WTC11 (cell line): ENCODE measurements at regions of chr1 and their contacts with region 1.

Region 1: GRCh38 chr1:39098546-39099250 is 72.5 kb downstream of the NDUFS5 start:
- DNase-seq: peak; percentile 76
- ATAC-seq: peak; percentile 85
- H3K4me3 Mint-ChIP-seq: no peak overlapping the region
- H3K27ac Mint-ChIP-seq: peak overlapping the region; percentile 83; the same call in 1 of the 2 replicates
- H3K4me1 Mint-ChIP-seq: peaks cover 21% of the 10 kb centered on the region
- H3K27me3 Mint-ChIP-seq: no peaks in the 10 kb centered on the region
- CTCF ChIP-seq: peak; percentile 42; the same call in 1 of the 2 replicates

Region 2: DNA sequence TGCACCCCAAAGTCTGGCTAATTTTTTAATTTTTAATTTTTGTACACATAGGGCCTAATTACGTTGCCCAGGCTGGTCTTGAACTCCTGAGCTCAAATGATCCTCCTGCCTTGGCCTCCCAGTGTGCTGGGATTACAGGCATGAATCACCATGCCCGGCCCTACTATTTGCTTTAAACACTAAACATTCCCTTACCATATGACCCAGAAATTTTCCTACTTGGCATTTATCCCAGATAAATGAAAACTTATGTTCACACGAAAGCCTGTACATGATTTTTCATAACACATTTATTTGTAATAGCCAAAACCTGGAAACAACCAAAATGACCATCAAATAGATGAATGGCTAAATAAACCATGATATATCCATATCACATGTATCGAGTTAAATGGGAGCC is 36.7 kb before region 1 on chr1:
- CTCF ChIA-PET with region 1: no interaction called
- POLR2A ChIA-PET with region 1: no interaction called
- DNase-seq: no peak
- ATAC-seq: no peak
- H3K4me3 Mint-ChIP-seq: no peak overlapping the region
- H3K27ac Mint-ChIP-seq: no peak overlapping the region
- H3K4me1 Mint-ChIP-seq: peaks cover 3% of the 10 kb centered on the region; the same call in 1 of the 2 replicates
- H3K27me3 Mint-ChIP-seq: no peaks in the 10 kb centered on the region
- CTCF ChIP-seq: no peak

Region 3: DNA sequence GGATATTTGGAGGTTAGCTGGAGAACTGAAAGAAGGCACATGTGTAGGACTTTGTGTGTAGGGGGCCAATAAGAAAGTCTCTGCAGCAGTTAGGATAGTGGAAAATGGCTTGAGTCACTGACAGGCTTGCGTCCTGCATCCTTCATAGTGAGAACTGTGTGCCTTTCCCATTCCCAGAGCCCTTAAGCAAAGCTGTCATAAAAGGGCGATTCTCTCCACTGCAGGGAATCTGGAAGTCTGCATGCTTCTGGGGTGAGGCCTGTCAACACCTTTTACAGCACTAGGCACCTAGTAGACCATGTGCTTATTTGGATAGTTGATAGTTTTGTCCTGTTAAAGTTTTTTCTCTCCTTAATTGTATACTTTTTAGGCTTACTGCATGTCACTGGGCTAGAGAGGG is 66.4 kb after region 1 on chr1:
- CTCF ChIA-PET with region 1: interaction called, 11 read pairs
- POLR2A ChIA-PET with region 1: no interaction called
- DNase-seq: no peak
- ATAC-seq: peak; percentile 52
- H3K4me3 Mint-ChIP-seq: no peak overlapping the region
- H3K27ac Mint-ChIP-seq: peak overlapping the region; percentile 42
- H3K4me1 Mint-ChIP-seq: peaks cover 74% of the 10 kb centered on the region
- H3K27me3 Mint-ChIP-seq: no peaks in the 10 kb centered on the region
- CTCF ChIP-seq: no peak

Region 4: GRCh38 chr1:39196244-39197215 is 97.8 kb after region 1 on chr1:
- CTCF ChIA-PET with region 1: interaction called, 131 read pairs
- POLR2A ChIA-PET with region 1: interaction called, 3 read pairs
- DNase-seq: no peak
- ATAC-seq: no peak
- H3K4me3 Mint-ChIP-seq: no peak overlapping the region
- H3K27ac Mint-ChIP-seq: 0 out of 2 replicates have a peak overlapping the region, but pooled peaks have one; percentile 49
- H3K4me1 Mint-ChIP-seq: peaks cover 46% of the 10 kb centered on the region
- H3K27me3 Mint-ChIP-seq: no peaks in the 10 kb centered on the region
- CTCF ChIP-seq: no peak

Region 5: GRCh38 chr1:39238476-39238875 is 139.8 kb after region 1 on chr1:
- CTCF ChIA-PET with region 1: interaction called, 10 read pairs
- POLR2A ChIA-PET with region 1: no interaction called
- DNase-seq: no peak
- ATAC-seq: no peak
- H3K4me3 Mint-ChIP-seq: no peak overlapping the region
- H3K27ac Mint-ChIP-seq: 0 out of 2 replicates have a peak overlapping the region, but pooled peaks have one; percentile 28
- H3K4me1 Mint-ChIP-seq: no peaks in the 10 kb centered on the region
- H3K27me3 Mint-ChIP-seq: no peaks in the 10 kb centered on the region
- CTCF ChIP-seq: no peak

Region 6: GRCh38 chr1:39275836-39276507 is 177.3 kb after region 1 on chr1:
- CTCF ChIA-PET with region 1: interaction called, 21 read pairs
- POLR2A ChIA-PET with region 1: no interaction called
- DNase-seq: no peak
- ATAC-seq: no peak
- H3K4me3 Mint-ChIP-seq: no peak overlapping the region
- H3K27ac Mint-ChIP-seq: 0 out of 2 replicates have a peak overlapping the region, but pooled peaks have one; percentile 0
- H3K4me1 Mint-ChIP-seq: peaks cover 60% of the 10 kb centered on the region
- H3K27me3 Mint-ChIP-seq: no peaks in the 10 kb centered on the region
- CTCF ChIP-seq: no peak

Region 7: DNA sequence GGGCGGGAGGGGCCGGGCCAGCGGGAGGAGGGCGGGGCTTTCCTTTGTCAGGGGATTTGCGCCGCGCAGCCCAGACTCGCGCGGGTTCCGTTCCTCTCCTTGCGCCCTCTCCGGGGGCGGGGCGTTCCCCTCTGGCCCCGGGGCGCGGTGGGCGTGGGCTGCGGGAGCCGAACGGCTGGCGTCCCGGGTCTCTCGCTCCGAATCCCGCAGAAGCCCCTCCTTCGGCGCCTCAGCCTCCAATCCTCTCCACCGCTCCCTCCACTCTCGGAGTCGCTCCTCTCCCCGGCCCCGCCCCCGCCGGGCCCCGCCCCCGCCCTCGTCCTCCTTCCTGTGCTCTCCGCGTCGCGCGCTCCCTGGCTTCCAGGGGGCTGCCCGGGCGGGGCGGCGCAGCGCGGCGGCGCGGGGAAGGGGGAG is 309.9 kb after region 1 on chr1:
- CTCF ChIA-PET with region 1: interaction called, 45 read pairs
- POLR2A ChIA-PET with region 1: no interaction called
- DNase-seq: peak; percentile 93
- ATAC-seq: peak; percentile 90
- H3K4me3 Mint-ChIP-seq: peak overlapping the region; percentile 86
- H3K27ac Mint-ChIP-seq: no peak overlapping the region
- H3K4me1 Mint-ChIP-seq: peaks cover 54% of the 10 kb centered on the region
- H3K27me3 Mint-ChIP-seq: no peaks in the 10 kb centered on the region; the same call in 1 of the 2 replicates
- CTCF ChIP-seq: no peak